IMR-90 (cell line): ENCODE measurements at regions of chr4 and their contacts with region 1.

Region 1: GRCh38 chr4:186037692-186038658 is 31.0 kb upstream of the TLR3 start:
- DNase-seq: peak; percentile 80
- ATAC-seq: peak; percentile 90
- H3K4me3 ChIP-seq: no peak overlapping the region
- H3K27ac ChIP-seq: no peak overlapping the region
- H3K4me1 ChIP-seq: no peaks in the 10 kb centered on the region
- H3K27me3 ChIP-seq: peaks cover 17% of the 10 kb centered on the region
- CTCF ChIP-seq: peak; percentile 83
- POLR2A ChIP-seq: no peak
- RAD21 ChIP-seq: peak; percentile 91

Region 2: GRCh38 chr4:185039508-185040273 is 998.3 kb before region 1 on chr4:
- CTCF ChIA-PET with region 1: no interaction called
- POLR2A ChIA-PET with region 1: no interaction called
- dilution Hi-C with region 1: no loop called
- in situ Hi-C with region 1: no loop called
- intact Hi-C with region 1: loop called (anchors 10 kb)
- DNase-seq: peak; percentile 68
- ATAC-seq: peak; percentile 99
- H3K4me3 ChIP-seq: peak overlapping the region; percentile 34
- H3K27ac ChIP-seq: no peak overlapping the region
- H3K4me1 ChIP-seq: no peaks in the 10 kb centered on the region
- H3K27me3 ChIP-seq: peaks cover 7% of the 10 kb centered on the region
- CTCF ChIP-seq: peak; percentile 86
- POLR2A ChIP-seq: no peak
- RAD21 ChIP-seq: peak; percentile 72

Region 3: GRCh38 chr4:185142912-185143595 is 894.9 kb before region 1 on chr4 and contains the start of gene SLC25A4:
- CTCF ChIA-PET with region 1: interaction called, 3 read pairs
- POLR2A ChIA-PET with region 1: no interaction called
- dilution Hi-C with region 1: no loop called
- in situ Hi-C with region 1: no loop called
- intact Hi-C with region 1: loop called (anchors 5 kb)
- DNase-seq: peak; percentile 62
- ATAC-seq: peak; percentile 98
- H3K4me3 ChIP-seq: peak within 1 kb of the TSS; percentile 81
- H3K27ac ChIP-seq: no peak within 1 kb of the TSS; the same call in 1 of the 2 replicates
- H3K4me1 ChIP-seq: no peaks in the 10 kb centered on the region; the same call in 1 of the 2 replicates
- H3K27me3 ChIP-seq: peaks cover 5% of the 10 kb centered on the region
- CTCF ChIP-seq: peak; percentile 53
- POLR2A ChIP-seq: peak; percentile 92
- RAD21 ChIP-seq: no peak; the same call in 1 of the 2 replicates
- total RNA-seq, gene SLC25A4: 16.0 and 21.9 TPM in 2 replicates

Region 4: GRCh38 chr4:185183619-185184281 is 854.2 kb before region 1 on chr4:
- CTCF ChIA-PET with region 1: no interaction called
- POLR2A ChIA-PET with region 1: no interaction called
- dilution Hi-C with region 1: no loop called
- in situ Hi-C with region 1: loop called (anchors 25 kb)
- intact Hi-C with region 1: no loop called
- DNase-seq: peak; percentile 93
- ATAC-seq: peak; percentile 71
- H3K4me3 ChIP-seq: no peak overlapping the region
- H3K27ac ChIP-seq: no peak overlapping the region
- H3K4me1 ChIP-seq: peaks cover 5% of the 10 kb centered on the region; the same call in 1 of the 2 replicates
- H3K27me3 ChIP-seq: no peaks in the 10 kb centered on the region
- CTCF ChIP-seq: peak; percentile 84
- POLR2A ChIP-seq: no peak
- RAD21 ChIP-seq: peak; percentile 73

Region 5: GRCh38 chr4:185479507-185479971 is 558.4 kb before region 1 on chr4:
- CTCF ChIA-PET with region 1: no interaction called
- POLR2A ChIA-PET with region 1: no interaction called
- dilution Hi-C with region 1: no loop called
- in situ Hi-C with region 1: loop called (anchors 25 kb)
- intact Hi-C with region 1: no loop called
- DNase-seq: no peak
- ATAC-seq: no peak
- H3K4me3 ChIP-seq: no peak overlapping the region
- H3K27ac ChIP-seq: no peak overlapping the region
- H3K4me1 ChIP-seq: no peaks in the 10 kb centered on the region
- H3K27me3 ChIP-seq: peaks cover 17% of the 10 kb centered on the region
- CTCF ChIP-seq: no peak
- POLR2A ChIP-seq: no peak
- RAD21 ChIP-seq: no peak

Region 6: DNA sequence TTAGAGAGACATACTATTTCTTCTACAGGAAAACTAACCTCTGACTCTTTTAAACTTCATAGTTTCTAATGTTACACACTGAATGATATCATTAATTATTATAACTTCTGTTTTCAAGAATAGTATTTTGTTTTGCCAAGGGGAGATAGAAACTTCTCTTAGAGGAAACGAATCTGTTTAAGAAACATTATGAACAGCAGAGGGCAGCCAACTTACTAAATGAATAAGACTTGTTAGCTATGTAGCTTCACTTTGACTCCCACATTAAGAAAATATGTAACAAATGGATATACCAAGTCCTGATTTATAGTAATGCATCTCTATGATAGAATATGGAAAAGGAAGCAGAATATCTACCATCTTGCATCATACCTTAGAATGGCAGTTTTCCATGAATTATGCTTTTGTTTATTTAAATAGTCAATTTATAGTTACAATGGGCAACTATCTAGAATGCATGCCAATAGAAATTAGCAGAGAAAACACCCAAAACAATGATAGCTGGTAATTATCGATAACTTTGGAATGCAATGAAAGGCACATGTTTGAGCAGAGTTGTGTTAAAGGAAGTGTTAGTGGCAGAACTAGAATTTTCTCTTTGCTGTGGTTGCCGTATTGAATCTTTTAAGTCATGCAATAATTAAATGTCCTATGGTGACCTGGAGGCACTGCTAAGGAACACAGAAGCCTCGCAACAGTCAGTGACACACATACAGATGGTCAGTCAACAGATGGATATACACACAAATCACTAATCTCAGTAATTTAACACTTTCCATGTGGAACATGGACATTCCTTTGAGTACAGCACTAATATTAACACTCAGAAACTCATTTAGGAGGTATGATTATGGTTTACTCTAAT is 396.9 kb before region 1 on chr4:
- CTCF ChIA-PET with region 1: interaction called, 5 read pairs
- POLR2A ChIA-PET with region 1: no interaction called
- dilution Hi-C with region 1: no loop called
- in situ Hi-C with region 1: no loop called
- intact Hi-C with region 1: loop called (anchors 1 kb)
- DNase-seq: peak; percentile 82
- ATAC-seq: no peak
- H3K4me3 ChIP-seq: no peak overlapping the region
- H3K27ac ChIP-seq: no peak overlapping the region
- H3K4me1 ChIP-seq: peaks cover 3% of the 10 kb centered on the region; the same call in 1 of the 2 replicates
- H3K27me3 ChIP-seq: peaks cover 50% of the 10 kb centered on the region
- CTCF ChIP-seq: peak; percentile 62
- POLR2A ChIP-seq: no peak
- RAD21 ChIP-seq: peak; percentile 54

Region 7: DNA sequence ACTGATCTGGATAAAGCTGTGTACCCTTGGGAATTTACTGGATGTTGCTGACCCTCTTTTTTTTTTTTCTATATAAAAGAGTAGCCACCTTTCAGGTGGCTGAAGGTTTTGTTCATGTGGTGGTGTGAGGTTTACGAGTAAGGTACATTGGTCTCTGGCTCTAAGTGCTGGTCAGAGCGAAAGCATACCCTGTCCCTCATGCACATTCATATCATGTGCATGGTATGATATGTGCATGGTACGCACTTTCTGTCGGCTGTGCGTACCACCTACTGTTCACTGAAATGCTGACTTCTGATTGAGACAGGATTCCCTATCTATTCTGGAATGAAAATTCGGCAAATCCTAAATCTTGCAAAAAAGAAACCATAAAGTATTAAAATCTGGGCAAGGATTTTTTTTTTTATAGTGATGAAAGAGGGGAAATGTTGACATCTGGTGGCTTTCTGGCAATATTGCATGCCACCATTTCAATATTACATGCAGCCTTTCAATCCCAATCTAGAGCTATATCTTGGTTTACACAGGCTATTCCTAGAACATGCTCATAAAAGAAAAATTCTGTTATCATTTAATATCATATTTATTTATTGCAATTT is 99.3 kb after region 1 on chr4:
- CTCF ChIA-PET with region 1: no interaction called
- POLR2A ChIA-PET with region 1: no interaction called
- dilution Hi-C with region 1: no loop called
- in situ Hi-C with region 1: no loop called
- intact Hi-C with region 1: loop called (anchors 10 kb)
- DNase-seq: peak; percentile 27
- ATAC-seq: peak; percentile 68
- H3K4me3 ChIP-seq: no peak overlapping the region
- H3K27ac ChIP-seq: no peak overlapping the region
- H3K4me1 ChIP-seq: no peaks in the 10 kb centered on the region
- H3K27me3 ChIP-seq: peaks cover 2% of the 10 kb centered on the region; the same call in 1 of the 2 replicates
- CTCF ChIP-seq: peak; percentile 51
- POLR2A ChIP-seq: no peak
- RAD21 ChIP-seq: peak; percentile 54